Tibial artery (tissue), 4 donors: ENCODE measurements at regions of chr18 and their contacts with region 1.

Region 1: GRCh38 chr18:9973470-9973869 is 59.7 kb downstream of the VAPA start:
- DNase-seq: no peak
- H3K4me3 ChIP-seq: no peak overlapping the region
- H3K27ac ChIP-seq: no peak overlapping the region
- H3K4me1 ChIP-seq: no peaks in the 10 kb centered on the region
- H3K27me3 ChIP-seq: peaks cover 0 to 2% of the 10 kb centered on the region in 2 donors
- CTCF ChIP-seq: no peak

Region 2: GRCh38 chr18:10519999-10520935 is 546.8 kb after region 1 on chr18:
- intact Hi-C with region 1: loop called (anchors 2 kb)
- DNase-seq: peak; percentile 89 to 92
- H3K4me3 ChIP-seq: no peak overlapping the region
- H3K27ac ChIP-seq: peak overlapping the region in 1 of 2 donors; percentile 62
- H3K4me1 ChIP-seq: peaks cover 0 to 36% (median 33%) of the 10 kb centered on the region in 4 donors
- H3K27me3 ChIP-seq: no peaks in the 10 kb centered on the region
- CTCF ChIP-seq: peak; percentile 82 to 87